Left ventricle myocardium inferior (tissue), 1 donor: ENCODE measurements at regions of chr9 and their contacts with region 1.

Region 1: DNA sequence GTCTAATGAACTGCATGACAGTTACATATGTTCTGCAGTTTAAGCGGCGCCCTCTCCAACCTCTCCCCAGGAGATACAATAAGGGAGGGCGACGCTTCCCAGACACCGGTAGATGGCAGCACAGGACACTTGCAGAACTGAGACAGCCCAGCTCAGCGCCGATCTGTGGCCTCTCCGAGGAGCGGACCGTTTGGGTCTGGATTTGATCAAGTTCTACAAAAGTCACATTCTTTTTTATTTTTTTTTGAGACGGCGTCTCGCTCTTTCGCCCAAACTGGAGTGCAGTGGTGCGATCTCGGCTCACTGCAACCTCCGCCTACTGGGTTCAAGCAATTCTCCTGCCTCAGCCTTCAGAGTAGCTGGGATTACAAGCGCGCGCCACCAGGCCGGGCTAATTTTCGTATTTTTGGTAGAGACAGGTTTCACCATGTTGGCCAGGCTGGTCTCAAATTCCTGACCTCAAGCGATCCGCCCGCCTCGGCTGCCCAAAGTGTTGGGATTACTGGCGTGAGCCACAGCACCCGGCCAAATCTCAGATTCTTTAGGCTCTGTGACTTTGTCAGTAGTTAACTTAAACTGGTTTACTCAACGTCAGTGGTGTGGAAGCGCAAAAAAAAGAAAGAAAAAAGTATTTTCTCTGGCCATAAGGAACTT is 1.4 kb upstream of the ATOSB start:
- DNase-seq: peak; percentile 88
- H3K4me3 ChIP-seq: peak overlapping the region; percentile 74
- H3K27ac ChIP-seq: peak overlapping the region; percentile 95
- H3K4me1 ChIP-seq: peaks cover 49% of the 10 kb centered on the region
- H3K27me3 ChIP-seq: no peaks in the 10 kb centered on the region
- CTCF ChIP-seq: peak; percentile 97

Region 2: GRCh38 chr9:35161713-35162604 is 44.9 kb after region 1 on chr9 and contains the start of gene UNC13B:
- intact Hi-C with region 1: loop called (anchors 5 kb)
- DNase-seq: peak; percentile 95
- H3K4me3 ChIP-seq: peak within 1 kb of the TSS; percentile 83
- H3K27ac ChIP-seq: peak within 1 kb of the TSS; percentile 98
- H3K4me1 ChIP-seq: peaks cover 43% of the 10 kb centered on the region
- H3K27me3 ChIP-seq: no peaks in the 10 kb centered on the region
- CTCF ChIP-seq: no peak
- total RNA-seq, gene UNC13B: 21.6 TPM

Region 3: DNA sequence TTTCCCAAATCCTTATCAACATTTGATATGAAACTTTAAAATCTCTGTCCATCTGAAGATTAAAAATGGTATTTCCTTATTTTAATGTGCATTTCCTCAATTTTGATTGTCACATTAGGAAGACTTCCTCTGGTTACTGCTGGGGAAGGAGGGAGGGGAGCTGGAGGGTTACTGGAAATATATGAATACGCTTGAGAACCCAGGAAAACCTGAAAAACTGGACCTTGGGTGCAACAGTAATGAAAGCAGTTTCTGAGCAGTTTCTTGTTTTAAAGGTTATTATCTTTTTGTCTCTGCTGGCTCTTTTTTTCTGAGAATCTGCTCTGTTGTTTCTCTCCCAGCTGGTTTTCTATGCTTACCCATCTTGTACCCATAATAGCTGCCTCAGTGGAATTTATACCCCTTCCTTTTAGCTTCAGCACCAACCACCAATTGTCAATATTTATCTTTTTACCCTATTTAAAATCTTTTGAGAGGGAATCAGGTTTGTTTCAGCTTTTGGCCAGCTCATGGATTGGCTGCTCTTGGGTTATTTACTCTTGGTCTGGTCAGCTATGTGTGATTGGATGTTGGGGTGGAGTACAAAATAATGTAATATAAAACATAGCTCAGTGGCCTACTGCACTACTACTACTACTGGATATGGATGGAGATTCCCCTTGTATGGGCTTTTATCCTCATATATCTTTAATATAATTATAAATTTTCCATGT is 112.2 kb after region 1 on chr9:
- intact Hi-C with region 1: no loop called
- DNase-seq: no peak
- H3K4me3 ChIP-seq: no peak overlapping the region
- H3K27ac ChIP-seq: no peak overlapping the region
- H3K4me1 ChIP-seq: peaks cover 36% of the 10 kb centered on the region
- H3K27me3 ChIP-seq: no peaks in the 10 kb centered on the region
- CTCF ChIP-seq: no peak

Region 4: DNA sequence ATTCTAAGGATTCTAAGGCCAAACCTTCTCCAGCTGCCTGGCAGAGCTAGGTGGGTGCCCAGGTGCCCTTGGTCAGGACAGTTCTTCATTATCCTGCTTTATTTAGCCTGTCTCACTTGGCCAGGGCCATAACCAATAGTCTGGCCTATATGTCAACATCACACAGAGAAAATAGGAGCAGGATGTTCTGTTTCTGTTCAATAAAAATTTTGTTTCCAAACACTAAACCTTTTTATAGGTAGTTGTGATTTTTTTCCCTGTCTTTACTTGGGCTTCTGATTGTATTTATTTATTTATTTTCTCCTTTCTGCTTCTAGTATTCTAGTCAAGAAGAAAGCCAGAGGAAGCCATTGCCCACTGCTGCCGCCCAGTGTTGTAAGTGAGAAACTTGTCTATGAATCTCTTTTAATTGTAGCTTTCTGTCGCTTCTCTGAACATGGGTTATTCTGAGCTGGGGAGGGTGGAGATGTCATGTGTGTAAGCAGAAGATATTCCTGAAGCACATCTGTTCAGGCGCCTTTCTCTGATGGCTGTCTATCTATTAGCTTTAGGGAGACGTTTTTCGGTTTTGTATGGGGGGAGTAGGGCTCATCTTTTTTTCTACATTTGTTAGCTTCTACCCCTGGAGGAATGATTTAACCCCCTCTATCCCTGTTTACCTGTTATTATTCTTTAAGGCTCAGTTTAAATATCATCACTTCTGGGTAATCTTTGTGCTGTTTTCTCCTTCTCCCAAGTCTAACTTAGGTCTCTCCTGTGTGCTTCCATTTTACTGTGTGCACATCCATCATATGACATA is 141.8 kb after region 1 on chr9:
- intact Hi-C with region 1: loop called (anchors 10 kb)
- DNase-seq: peak; percentile 70
- H3K4me3 ChIP-seq: no peak overlapping the region
- H3K27ac ChIP-seq: no peak overlapping the region
- H3K4me1 ChIP-seq: no peaks in the 10 kb centered on the region
- H3K27me3 ChIP-seq: no peaks in the 10 kb centered on the region
- CTCF ChIP-seq: peak; percentile 81

Region 5: GRCh38 chr9:35374436-35374835 is 257.4 kb after region 1 on chr9:
- intact Hi-C with region 1: loop called (anchors 10 kb)
- DNase-seq: no peak
- H3K4me3 ChIP-seq: no peak overlapping the region
- H3K27ac ChIP-seq: no peak overlapping the region
- H3K4me1 ChIP-seq: peaks cover 19% of the 10 kb centered on the region
- H3K27me3 ChIP-seq: no peaks in the 10 kb centered on the region
- CTCF ChIP-seq: no peak

Region 6: GRCh38 chr9:35476596-35476995 is 359.6 kb after region 1 on chr9:
- intact Hi-C with region 1: loop called (anchors 5 kb)
- DNase-seq: no peak
- H3K4me3 ChIP-seq: no peak overlapping the region
- H3K27ac ChIP-seq: no peak overlapping the region
- H3K4me1 ChIP-seq: no peaks in the 10 kb centered on the region
- H3K27me3 ChIP-seq: no peaks in the 10 kb centered on the region
- CTCF ChIP-seq: no peak